Head of caudate nucleus (tissue), 42 donors: ENCODE measurements at regions of chr5 and their contacts with region 1.

Region 1: GRCh38 chr5:72556351-72557166 is 49.3 kb upstream of the ZNF366 start:
- DNase-seq: peak in 40 of 42 donors; percentile 17 to 72 (median 44)

Region 2: GRCh38 chr5:72179028-72179815 is 377.3 kb before region 1 on chr5:
- intact Hi-C with region 1: no loop called
- DNase-seq: peak; percentile 26 to 89 (median 74)

Region 3: GRCh38 chr5:72377910-72378635 is 178.5 kb before region 1 on chr5:
- intact Hi-C with region 1: no loop called
- DNase-seq: no peak

Region 4: GRCh38 chr5:72440207-72440638 is 116.3 kb before region 1 on chr5:
- intact Hi-C with region 1: no loop called
- DNase-seq: no peak

Region 5: DNA sequence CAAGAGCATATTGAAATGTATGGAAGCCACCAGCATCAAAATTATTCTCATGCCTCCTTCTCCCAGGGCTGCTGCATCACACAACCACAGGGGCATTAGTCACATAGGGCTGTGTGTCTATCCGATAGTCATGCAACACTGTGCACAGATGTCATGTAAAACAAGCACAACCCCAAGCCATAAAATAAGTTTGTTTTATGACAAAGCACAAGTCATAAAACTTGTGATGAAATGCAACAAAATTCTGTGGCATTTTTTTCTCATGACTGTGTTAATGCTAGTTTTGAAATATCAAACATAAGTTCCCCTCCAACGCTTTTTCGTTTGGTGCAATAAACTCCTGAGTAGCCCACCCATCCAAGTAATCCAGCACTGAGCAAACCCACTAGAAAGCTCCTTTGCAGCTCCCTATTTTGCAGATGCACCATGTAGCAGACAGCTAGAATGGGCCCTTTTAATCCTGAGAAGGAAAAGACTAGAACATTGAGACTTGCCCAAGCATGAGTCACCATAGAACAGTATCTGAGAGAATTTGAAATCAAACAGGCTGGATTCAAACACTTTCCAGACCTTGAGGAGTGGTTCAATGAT is 43.9 kb after region 1 on chr5:
- intact Hi-C with region 1: loop called (anchors 10 kb)
- DNase-seq: no peak

Region 6: DNA sequence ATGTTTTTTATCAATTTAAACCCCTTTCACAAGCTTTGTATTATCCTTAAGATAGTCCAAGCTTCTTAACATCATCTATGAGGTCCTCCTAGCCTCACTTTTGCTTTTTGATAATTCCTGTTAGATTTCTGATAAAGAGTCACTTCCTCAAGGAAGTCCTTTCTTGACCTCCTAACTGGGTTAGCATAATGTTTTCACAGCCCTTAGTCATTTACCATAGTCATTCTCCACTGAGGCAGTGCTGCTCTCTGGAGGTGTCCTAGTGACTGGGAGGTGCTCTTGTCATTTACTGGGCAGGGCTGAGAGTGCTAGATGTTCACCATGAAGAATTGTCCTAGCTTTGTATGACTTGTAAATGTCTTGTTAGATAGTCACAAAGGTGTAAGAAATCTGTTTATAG is 286.3 kb after region 1 on chr5:
- intact Hi-C with region 1: no loop called
- DNase-seq: no peak